Endothelial cell of umbilical vein (primary cell): ENCODE measurements at regions of chr2 and their contacts with region 1.

Region 1: DNA sequence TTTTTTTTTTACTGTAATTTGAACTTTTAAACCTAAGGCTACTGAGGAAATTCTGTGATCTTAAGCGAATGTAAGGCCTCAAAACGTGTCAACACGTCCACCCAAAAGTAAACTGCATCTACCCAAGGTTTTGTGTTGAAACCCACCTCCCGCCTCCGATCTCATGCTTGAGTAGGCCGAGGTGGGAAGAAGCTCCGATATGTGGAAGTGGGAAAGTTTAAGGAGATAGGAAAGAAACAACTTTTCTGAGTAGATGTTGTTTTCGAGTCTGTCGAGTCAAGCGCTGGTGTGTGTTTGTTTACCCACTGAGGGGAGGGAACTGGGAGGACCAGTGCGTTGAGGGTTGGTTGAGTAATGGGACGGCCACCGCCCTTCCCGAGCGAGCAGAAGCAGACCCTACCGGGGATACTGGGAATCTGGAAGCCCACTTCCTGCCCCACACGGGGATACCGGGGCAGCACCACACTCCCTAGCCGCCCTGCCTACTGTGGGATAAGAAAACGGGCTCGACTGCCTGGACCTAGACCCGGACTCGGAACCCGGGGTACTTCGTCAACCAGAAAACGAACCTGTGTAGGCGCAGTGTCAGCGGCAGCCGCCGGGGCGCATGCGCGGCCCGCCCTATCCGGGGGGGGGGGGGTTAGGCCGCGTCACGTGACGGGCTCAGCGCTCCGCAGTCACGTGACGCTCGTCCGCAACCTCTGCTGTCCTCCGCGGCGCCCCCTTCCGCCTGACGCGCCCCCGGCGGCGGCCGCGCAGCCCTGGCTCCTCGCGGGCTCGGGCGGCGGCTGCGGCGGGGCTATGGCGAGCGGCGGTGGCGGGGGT is at the start of gene RETREG2:
- DNase-seq: peak; percentile 93
- H3K4me3 ChIP-seq: peak within 1 kb of the TSS; percentile 44 to 81 (median 67)
- H3K27ac ChIP-seq: peak within 1 kb of the TSS; percentile 62
- H3K4me1 ChIP-seq: peaks cover 18% of the 10 kb centered on the region
- H3K27me3 ChIP-seq: no peaks in the 10 kb centered on the region
- CTCF ChIP-seq: peak in 1 of 2 donors; percentile 25
- POLR2A ChIP-seq: peak; percentile 97
- total RNA-seq, gene RETREG2: 58.2 and 59.5 TPM in 2 replicates

Region 2: GRCh38 chr2:219229305-219230058 is 51.7 kb after region 1 on chr2 and contains the starts of genes ANKZF1 and ATG9A:
- CTCF ChIA-PET with region 1: interaction called, 3 read pairs
- POLR2A ChIA-PET with region 1: interaction called, 5 read pairs
- dilution Hi-C with region 1: no loop called
- intact Hi-C with region 1: loop called (anchors 1 kb)
- DNase-seq: peak; percentile 100
- H3K4me3 ChIP-seq: peak within 1 kb of the TSS; percentile 70 to 76 (median 70)
- H3K27ac ChIP-seq: peak within 1 kb of the TSS; percentile 76
- H3K4me1 ChIP-seq: peaks cover 15% of the 10 kb centered on the region
- H3K27me3 ChIP-seq: no peaks in the 10 kb centered on the region
- CTCF ChIP-seq: no peak
- POLR2A ChIP-seq: peak; percentile 85
- total RNA-seq, gene ANKZF1: 34.0 and 36.2 TPM in 2 replicates
- total RNA-seq, gene ATG9A: 62.2 and 65.5 TPM in 2 replicates

Region 3: GRCh38 chr2:219245148-219245898 is 67.6 kb after region 1 on chr2 and contains the starts of genes GLB1L and STK16:
- CTCF ChIA-PET with region 1: interaction called, 3 read pairs
- POLR2A ChIA-PET with region 1: interaction called, 3 read pairs
- dilution Hi-C with region 1: no loop called
- intact Hi-C with region 1: loop called (anchors 1 kb)
- DNase-seq: peak; percentile 91
- H3K4me3 ChIP-seq: peak within 1 kb of the TSS; percentile 67 to 80 (median 67)
- H3K27ac ChIP-seq: peak within 1 kb of the TSS; percentile 92
- H3K4me1 ChIP-seq: peaks cover 28% of the 10 kb centered on the region
- H3K27me3 ChIP-seq: no peaks in the 10 kb centered on the region
- CTCF ChIP-seq: no peak
- POLR2A ChIP-seq: peak; percentile 93
- total RNA-seq, gene GLB1L: 9.2 and 9.5 TPM in 2 replicates
- total RNA-seq, gene STK16: 18.8 and 21.1 TPM in 2 replicates

Region 4: DNA sequence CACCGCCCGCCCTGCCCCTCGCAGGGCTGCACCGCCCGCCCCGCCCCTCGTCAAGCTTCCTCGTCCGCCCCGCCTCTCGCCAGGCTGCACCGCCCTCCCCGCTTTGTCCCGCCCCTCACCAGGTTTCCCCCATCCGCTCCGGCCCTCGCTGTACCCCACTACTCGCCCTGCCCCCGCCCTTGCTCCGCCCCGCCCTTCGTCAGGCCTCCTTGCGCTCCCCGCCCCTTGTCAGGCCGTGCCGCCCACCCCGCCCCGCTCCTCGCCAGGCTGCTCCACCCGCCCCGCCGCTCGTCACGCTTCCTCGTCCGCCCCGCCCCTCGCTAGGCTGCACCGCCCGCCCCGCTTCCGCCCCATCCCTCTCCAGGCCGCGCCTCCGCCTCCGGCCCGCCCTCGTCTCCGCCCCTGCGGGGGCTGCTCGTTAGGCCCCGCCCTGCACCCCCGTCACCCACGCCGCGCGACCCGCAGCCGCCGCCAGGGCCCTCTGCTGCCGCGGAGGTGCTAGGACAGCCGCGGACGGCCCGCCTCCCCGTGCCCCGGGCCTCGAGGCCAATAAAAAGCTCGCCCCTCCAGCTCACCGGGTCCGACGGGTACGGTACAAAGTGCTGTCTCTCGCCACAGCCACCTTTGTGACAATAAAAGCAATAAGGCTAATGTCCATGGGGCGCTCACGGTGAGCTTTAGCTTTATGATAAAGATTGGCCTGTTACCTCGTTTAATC is 210.5 kb after region 1 on chr2:
- CTCF ChIA-PET with region 1: no interaction called
- POLR2A ChIA-PET with region 1: no interaction called
- dilution Hi-C with region 1: no loop called
- intact Hi-C with region 1: loop called (anchors 2 kb)
- DNase-seq: peak; percentile 96
- H3K4me3 ChIP-seq: peak overlapping the region in 2 of 3 experiments; percentile 46 to 55
- H3K27ac ChIP-seq: no peak overlapping the region
- H3K4me1 ChIP-seq: peaks cover 9% of the 10 kb centered on the region
- H3K27me3 ChIP-seq: peaks cover 2% of the 10 kb centered on the region in 2 experiments
- CTCF ChIP-seq: peak; percentile 47 to 56
- POLR2A ChIP-seq: no peak